Mucosa of descending colon (tissue), 3 donors: ENCODE measurements at regions of chr17 and their contacts with region 1.

Region 1: DNA sequence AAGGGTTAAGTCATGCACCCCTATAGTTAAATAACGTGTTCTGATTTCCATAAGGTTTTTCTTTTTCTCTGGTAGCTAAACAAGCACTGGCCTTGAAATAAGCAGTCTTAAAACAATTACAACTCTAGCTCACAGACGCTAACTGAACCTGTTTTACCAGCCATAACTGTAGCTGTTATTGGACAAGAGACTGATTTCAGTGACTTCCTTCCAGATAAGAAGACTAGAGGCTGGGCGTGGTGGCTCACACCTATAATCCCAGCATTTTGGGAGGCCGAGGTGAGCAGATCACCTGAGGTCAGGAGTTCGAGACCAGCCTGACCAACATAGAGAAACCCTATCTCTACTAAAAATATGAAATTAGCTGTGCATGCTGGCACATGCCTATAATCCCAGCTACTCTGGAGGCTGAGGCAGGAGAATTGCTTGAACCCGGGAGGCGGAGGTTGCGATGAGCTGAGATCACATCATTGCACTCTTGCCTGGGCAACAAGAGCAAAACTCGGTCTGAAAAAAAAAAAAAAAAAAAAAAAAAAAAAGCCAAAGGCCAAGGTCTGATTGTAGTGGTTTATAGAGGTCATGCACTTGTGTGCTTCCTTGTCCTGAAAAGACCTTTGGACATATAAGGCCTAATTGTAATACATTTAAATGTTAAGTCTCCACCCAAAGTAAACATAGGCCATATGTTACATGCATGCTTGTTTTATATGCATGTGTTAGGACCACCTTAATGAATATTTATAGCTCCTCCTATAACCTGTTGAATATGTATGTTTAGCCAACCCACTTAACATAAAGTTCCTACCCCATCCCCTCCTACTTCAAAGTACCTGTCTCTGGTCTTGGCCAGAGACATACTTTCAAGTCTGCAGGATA is 319.5 kb upstream of the CA10 start:
- DNase-seq: peak in 2 of 3 donors; percentile 45 to 62
- ATAC-seq: peak; percentile 78
- H3K4me3 ChIP-seq: no peak overlapping the region
- H3K4me1 ChIP-seq: peaks cover 4% of the 10 kb centered on the region
- CTCF ChIP-seq: no peak

Region 2: GRCh38 chr17:51833620-51834019 is 644.4 kb before region 1 on chr17:
- intact Hi-C with region 1: no loop called
- DNase-seq: no peak
- ATAC-seq: no peak
- H3K4me3 ChIP-seq: no peak overlapping the region
- H3K4me1 ChIP-seq: no peaks in the 10 kb centered on the region
- CTCF ChIP-seq: no peak

Region 3: DNA sequence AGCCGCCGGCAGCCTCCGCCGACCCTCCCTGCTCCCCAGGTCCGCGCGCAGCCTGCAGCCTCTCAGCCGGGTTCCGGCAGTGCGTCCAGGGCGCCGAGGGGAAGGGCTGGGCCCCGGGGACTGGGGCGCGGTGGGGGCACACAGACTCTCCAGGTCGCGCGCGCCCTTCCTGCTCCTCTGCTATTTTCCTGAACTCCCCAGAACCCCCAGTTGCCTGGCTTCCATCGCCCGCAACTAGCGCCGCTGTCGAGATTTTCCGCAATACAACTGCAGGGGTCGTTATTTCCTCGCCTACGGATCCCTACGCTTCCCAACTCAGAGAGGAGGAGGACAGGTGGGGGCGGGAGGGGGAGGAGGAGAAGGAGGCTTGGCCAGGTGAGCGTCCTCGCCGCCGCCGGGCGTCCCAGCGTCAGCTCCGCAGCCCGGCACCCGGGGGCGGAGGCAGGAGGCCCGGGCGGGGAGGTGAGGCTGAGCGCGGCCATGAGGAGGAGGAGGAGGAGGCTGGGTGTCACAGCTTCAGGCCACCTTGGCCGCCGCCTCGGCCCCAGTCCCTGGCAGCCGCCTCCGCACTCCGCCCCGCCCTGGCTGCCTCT is 319.5 kb before region 1 on chr17 and contains the start of gene CA10:
- intact Hi-C with region 1: no loop called
- DNase-seq: no peak
- ATAC-seq: no peak
- H3K4me3 ChIP-seq: no peak within 1 kb of the TSS
- H3K4me1 ChIP-seq: no peaks in the 10 kb centered on the region
- CTCF ChIP-seq: no peak
- total RNA-seq, gene CA10: 0.46 to 1.2 (median 0.64) TPM

Region 4: GRCh38 chr17:52383493-52384100 is 94.5 kb before region 1 on chr17:
- intact Hi-C with region 1: loop called in 1 of 2 experiments (anchors 5 kb)
- DNase-seq: peak in 1 of 3 donors; percentile 88
- ATAC-seq: peak; percentile 94
- H3K4me3 ChIP-seq: no peak overlapping the region
- H3K4me1 ChIP-seq: no peaks in the 10 kb centered on the region
- CTCF ChIP-seq: no peak